ENCODE measurements at regions of chr16 and their contacts with region 1.

Region 1: DNA sequence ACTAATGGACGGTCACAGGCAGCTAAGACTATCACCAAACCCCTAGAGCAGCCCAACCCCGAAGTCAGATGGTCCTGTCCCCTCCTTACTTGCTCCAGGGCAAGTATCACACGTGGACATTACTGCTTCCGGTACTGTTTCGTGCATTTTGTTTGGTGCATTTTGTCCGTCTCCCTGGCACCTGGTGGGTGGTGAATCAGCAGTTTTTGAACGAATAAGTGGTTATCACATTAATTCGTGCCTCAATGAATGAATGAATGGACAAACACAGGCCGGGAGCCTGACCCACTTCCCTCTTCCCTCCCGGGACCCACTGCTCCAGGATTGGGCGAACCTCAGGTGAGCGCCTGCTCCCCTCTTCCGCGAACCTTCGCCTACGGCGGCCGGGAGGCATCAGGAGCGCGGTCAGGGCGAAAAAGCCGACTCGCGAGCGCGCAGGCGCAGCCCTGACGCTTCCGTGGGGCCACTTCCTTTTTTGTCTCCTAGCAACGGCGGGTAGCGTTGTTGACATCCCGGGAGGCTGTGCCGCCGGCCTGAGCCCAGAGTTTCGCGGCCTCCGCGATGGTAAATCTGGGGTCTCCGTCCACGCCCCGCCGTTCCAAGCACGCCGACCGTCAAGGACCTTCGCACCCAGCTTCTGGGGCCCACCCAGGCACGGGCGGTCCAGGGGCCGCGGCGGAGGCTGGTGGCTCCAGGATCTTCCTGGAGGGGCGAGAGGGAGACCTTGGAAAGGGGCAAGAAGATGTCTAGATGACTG is at the start of gene DYNLRB2:
- DNase-seq: peak; percentile 93 to 95
- ATAC-seq: peak; percentile 95 to 99 (median 97)
- H3K4me3 ChIP-seq: peak within 1 kb of the TSS; percentile 83
- H3K27ac ChIP-seq: no peak within 1 kb of the TSS
- H3K4me1 ChIP-seq: no peaks in the 10 kb centered on the region
- H3K27me3 ChIP-seq: peaks cover 0 to 23% (median 5%) of the 10 kb centered on the region in 3 donors
- CTCF ChIP-seq: no peak
- total RNA-seq, gene DYNLRB2: not detected

Region 2: GRCh38 chr16:80466024-80466987 is 74.4 kb before region 1 on chr16:
- intact Hi-C with region 1: no loop called
- DNase-seq: peak; percentile 45 to 62
- ATAC-seq: peak in 2 of 4 donors; percentile 48 to 69
- H3K4me3 ChIP-seq: no peak overlapping the region
- H3K27ac ChIP-seq: no peak overlapping the region
- H3K4me1 ChIP-seq: no peaks in the 10 kb centered on the region
- H3K27me3 ChIP-seq: no peaks in the 10 kb centered on the region
- CTCF ChIP-seq: peak; percentile 51

Region 3: DNA sequence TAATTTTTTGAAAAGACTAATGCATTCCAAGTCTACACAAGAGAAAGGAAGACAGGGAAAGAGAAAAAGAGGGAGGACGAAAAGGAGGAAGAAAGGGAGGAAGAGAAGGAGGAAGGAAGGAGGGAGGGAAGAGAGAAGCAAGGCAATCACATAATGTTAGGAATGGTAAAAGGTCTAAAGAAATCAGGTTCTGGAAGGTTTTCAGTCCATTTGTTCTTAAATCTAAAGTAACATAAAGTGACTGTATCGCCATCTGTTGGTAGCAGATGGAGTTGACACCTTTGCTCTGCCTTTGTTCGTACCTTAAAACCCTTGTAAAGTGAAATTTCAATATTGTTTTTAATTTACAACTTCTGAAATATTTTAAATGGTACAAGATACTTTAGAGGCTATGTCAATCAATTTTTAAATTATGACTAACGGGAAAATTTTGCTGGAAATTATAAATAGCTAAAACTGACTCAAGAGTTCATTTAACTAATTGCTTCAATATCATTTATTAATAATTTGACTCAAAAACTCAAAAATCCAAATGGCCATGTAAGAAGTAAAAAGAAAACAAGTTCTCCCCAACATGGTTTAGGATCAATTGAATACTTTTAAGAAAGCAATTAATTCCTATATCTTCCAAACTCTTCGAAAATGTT is 284.1 kb after region 1 on chr16:
- intact Hi-C with region 1: loop called in 1 of 2 experiments (anchors 10 kb)
- DNase-seq: no peak
- ATAC-seq: no peak
- H3K4me3 ChIP-seq: no peak overlapping the region
- H3K27ac ChIP-seq: no peak overlapping the region
- H3K4me1 ChIP-seq: no peaks in the 10 kb centered on the region
- H3K27me3 ChIP-seq: peaks cover 0 to 2% (median 0%) of the 10 kb centered on the region in 3 donors
- CTCF ChIP-seq: peak; percentile 53